ENCODE measurements at regions of chr3 and their contacts with region 1.

Region 1: DNA sequence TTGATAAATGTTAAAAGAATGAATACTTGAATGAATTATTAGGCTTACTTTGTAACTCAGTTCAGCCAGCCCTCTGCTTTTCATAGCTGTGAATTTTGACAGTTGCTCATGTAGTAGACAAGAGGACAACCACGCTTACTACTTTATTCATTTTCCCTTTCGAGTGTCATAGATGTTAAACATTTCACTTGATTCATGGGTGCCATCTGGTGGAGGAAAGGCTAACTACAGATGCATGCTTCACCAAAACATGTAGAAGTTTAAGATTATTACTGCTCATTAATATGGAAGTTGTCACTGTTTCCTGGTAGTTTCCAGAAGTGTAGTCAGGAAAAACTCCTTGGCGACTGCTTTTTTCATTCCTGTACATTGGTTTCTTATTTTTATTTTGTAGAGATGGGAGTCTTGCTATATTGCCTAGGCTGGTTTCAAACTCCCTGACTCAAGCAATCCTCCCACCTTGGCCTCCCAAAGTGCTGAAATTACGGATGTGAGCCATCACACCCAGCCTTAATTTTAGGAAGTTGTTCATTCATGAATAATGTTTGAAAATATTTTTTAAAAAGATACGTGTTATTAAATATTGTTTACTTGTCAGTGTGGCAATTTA is 163.2 kb downstream of the B3GALNT1 start:
- DNase-seq: peak; percentile 76 to 90 (median 84)
- H3K4me3 ChIP-seq: no peak overlapping the region
- H3K27ac ChIP-seq: no peak overlapping the region
- H3K4me1 ChIP-seq: no peaks in the 10 kb centered on the region
- H3K27me3 ChIP-seq: no peaks in the 10 kb centered on the region

Region 2: DNA sequence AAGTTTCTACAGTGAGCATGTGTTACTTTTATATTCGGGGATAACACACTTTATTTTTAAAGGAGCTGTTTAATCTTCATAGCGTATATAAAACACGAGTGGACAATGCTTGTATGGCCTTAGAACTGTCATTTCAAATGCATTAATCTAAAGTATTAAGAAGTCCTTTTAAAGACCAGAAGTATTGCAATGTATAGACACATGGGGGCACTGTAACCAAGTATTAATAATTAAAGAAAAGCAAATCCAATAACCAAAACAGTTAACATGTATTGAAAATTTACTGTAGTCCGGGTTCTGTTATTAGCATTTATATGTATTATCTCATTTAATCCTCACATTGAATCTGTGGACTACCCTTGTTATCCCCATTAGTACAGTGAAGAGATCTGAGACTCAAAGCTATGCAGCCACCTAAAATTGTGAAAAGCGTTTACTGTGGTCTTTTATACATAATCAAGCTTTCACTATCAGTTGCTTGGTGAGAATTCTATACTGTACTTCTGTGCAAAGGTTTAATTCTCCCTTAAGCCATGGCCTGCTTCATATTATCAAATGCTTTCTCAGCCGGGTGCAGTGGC is 254.9 kb before region 1 on chr3:
- CTCF ChIA-PET with region 1: interaction called, 13 read pairs
- POLR2A ChIA-PET with region 1: no interaction called
- DNase-seq: peak in 2 of 3 donors; percentile 20 to 27
- H3K4me3 ChIP-seq: no peak overlapping the region
- H3K27ac ChIP-seq: no peak overlapping the region
- H3K4me1 ChIP-seq: no peaks in the 10 kb centered on the region
- H3K27me3 ChIP-seq: no peaks in the 10 kb centered on the region

Region 3: DNA sequence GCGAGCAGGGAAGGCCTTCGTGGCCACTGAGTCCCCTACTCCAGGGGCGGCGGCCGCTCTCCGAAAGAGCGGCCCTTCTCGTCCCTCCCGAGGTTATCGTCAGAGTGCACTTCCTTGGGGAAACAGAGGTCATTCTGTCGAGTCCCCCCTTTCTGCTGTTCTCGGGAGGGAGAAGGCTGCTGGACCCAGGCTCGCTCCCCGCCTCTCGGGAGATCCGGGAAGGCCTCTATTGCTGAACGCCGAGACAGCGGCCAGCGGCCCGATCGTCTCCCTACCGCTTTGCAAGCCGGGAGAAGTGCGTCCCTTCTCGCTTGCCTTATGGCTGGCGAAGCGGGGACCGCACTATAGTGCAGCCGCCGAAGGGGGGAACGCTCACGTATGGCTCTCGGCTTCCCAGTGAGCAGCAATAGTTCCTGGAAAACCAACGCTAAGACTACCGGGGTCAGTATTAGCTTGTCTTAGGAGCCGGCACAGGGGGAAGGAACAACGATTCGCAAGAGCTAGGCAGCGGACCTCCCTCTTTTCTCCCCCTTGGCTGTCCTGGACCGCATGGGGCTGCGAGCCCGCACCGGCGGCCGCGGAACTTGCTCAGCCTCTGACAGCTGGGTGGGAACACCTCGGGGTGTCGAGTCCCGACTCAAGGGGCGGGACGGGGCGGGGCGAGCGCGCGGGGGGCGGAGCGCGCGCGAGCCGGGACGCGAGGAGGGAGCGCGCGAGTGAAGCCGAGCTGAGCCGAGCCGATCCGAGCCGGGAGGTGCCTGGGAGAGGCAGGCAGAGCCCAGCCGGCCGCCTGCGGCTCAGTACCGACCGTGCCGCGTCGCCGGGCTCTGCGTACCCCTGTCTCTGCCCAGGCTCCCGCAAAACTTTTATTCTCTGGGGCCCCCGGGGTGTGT is 186.9 kb before region 1 on chr3:
- CTCF ChIA-PET with region 1: interaction called, 10 read pairs
- POLR2A ChIA-PET with region 1: no interaction called
- DNase-seq: peak; percentile 92 to 97 (median 96)
- H3K4me3 ChIP-seq: peak overlapping the region; percentile 87 to 94 (median 92)
- H3K27ac ChIP-seq: peak overlapping the region; percentile 84 to 91
- H3K4me1 ChIP-seq: peaks cover 16 to 39% (median 34%) of the 10 kb centered on the region in 4 experiments
- H3K27me3 ChIP-seq: no peaks in the 10 kb centered on the region

Region 4: DNA sequence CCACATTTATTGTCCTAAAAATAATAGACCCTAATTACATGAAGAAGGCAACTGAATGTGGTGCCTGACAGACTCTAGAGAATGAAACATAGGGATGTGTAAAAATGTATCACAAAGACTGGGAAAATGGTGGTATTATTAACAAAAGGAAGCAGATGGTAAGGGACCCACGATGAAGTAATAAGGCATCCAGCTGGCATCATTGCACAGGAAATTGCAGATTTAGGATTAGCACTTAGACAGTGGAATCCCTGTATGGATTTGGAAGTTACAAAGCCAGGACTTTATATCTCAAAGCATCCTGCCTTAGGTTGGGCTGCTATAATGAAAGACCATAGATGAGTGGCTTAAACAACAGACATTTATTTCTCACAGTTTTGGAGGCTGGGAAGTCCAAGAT is 81.6 kb before region 1 on chr3:
- CTCF ChIA-PET with region 1: no interaction called
- POLR2A ChIA-PET with region 1: no interaction called
- DNase-seq: no peak
- H3K4me3 ChIP-seq: no peak overlapping the region
- H3K27ac ChIP-seq: no peak overlapping the region
- H3K4me1 ChIP-seq: peaks cover 0 to 2% (median 0%) of the 10 kb centered on the region in 4 experiments
- H3K27me3 ChIP-seq: no peaks in the 10 kb centered on the region

Region 5: GRCh38 chr3:160921020-160921635 is 20.9 kb before region 1 on chr3:
- CTCF ChIA-PET with region 1: interaction called, 20 read pairs
- POLR2A ChIA-PET with region 1: no interaction called
- DNase-seq: peak; percentile 17 to 36 (median 36)
- H3K4me3 ChIP-seq: no peak overlapping the region
- H3K27ac ChIP-seq: no peak overlapping the region
- H3K4me1 ChIP-seq: no peaks in the 10 kb centered on the region
- H3K27me3 ChIP-seq: no peaks in the 10 kb centered on the region

Region 6: GRCh38 chr3:161081633-161082032 is 139.6 kb after region 1 on chr3:
- CTCF ChIA-PET with region 1: no interaction called
- POLR2A ChIA-PET with region 1: no interaction called
- DNase-seq: peak; percentile 17 to 65 (median 56)
- H3K4me3 ChIP-seq: peak overlapping the region in 3 of 7 experiments; percentile 27 to 48 (median 43)
- H3K27ac ChIP-seq: peak overlapping the region in 1 of 2 experiments; percentile 1
- H3K4me1 ChIP-seq: peaks cover 6 to 10% (median 10%) of the 10 kb centered on the region in 4 experiments
- H3K27me3 ChIP-seq: no peaks in the 10 kb centered on the region